CD8-positive, alpha-beta memory T cell (primary cell): ENCODE measurements at regions of chr1 and their contacts with region 1.

Region 1: DNA sequence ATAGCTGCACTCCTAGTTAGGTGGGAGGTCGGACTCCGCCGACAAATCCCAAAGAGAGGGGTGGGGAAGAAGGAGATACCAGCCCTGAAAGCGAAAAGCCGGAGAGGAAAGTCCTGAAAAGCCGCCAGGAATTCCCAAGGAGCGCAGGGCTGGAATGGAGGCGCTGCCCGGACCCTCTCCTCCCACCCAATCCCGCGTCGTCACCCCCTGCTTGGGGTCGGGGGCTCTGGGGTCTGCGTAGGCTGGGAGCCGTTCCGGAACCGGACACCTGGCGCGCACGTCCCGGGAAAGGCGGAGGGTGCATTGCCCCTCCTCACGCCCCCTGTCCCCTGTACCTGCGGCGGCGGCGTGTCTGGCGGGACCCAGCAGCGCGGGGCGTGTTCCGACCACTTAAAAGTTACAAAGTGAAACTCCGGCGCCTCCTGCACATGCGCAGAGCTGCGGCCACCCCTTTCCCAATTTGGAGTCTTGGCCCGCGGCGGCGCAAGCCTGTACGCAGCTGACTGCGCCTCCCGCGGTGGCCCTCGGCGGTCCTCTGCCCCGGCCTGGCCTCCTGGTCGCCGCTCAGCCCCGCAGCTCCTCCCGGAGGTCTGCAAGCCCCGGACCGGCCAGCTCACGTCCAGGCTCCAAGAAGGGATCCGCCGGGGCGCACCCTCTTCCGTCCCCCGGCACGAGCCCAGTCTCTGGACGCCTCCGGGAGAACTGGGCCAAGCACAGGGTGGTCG is at the start of gene TMEM63A:
- DNase-seq: peak; percentile 86 to 94 (median 89)
- H3K4me3 ChIP-seq: peak within 1 kb of the TSS; percentile 92
- H3K4me3 Mint-ChIP-seq: peak within 1 kb of the TSS; percentile 94 to 99 (median 97)
- H3K27ac ChIP-seq: peak within 1 kb of the TSS; percentile 95
- H3K27ac Mint-ChIP-seq: peak within 1 kb of the TSS; percentile 90 to 97 (median 96)
- H3K4me1 ChIP-seq: peaks cover 48% of the 10 kb centered on the region
- H3K4me1 Mint-ChIP-seq: peaks cover 50 to 54% (median 53%) of the 10 kb centered on the region in 3 donors
- H3K27me3 ChIP-seq: no peaks in the 10 kb centered on the region
- H3K27me3 Mint-ChIP-seq: no peaks in the 10 kb centered on the region
- total RNA-seq, gene TMEM63A: 51.4 to 55.5 TPM

Region 2: GRCh38 chr1:225467193-225468020 is 414.7 kb before region 1 on chr1:
- CTCF ChIA-PET with region 1: interaction called, 6 read pairs
- POLR2A ChIA-PET with region 1: interaction called, 12 read pairs
- DNase-seq: peak; percentile 73 to 88 (median 86)
- H3K4me3 ChIP-seq: peak overlapping the region; percentile 84
- H3K4me3 Mint-ChIP-seq: peak overlapping the region; percentile 88 to 96 (median 92)
- H3K27ac ChIP-seq: peak overlapping the region; percentile 90
- H3K27ac Mint-ChIP-seq: peak overlapping the region; percentile 92 to 100 (median 98)
- H3K4me1 ChIP-seq: peaks cover 29% of the 10 kb centered on the region
- H3K4me1 Mint-ChIP-seq: peaks cover 47 to 65% (median 55%) of the 10 kb centered on the region in 3 donors
- H3K27me3 ChIP-seq: no peaks in the 10 kb centered on the region
- H3K27me3 Mint-ChIP-seq: peaks cover 0 to 3% of the 10 kb centered on the region in 2 donors

Region 3: DNA sequence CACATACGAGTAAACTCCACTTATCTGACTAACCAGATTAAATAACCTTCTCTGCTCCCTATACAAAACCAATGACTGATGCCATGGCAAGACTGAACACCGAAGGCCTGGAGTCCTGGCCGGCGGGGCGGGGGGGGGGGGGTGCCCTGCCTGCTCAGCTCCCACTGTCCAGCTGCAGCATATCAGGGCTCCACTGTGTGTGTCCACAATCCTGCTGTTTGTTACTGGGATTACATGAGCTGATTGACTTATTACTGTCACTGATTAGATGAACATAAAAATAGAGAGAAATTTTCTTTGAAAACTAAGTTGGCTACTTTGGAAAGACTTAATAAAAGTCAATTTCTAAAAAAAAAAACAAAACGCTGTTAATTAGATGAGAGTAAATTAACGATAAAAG is 24.9 kb before region 1 on chr1:
- CTCF ChIA-PET with region 1: interaction called, 10 read pairs
- POLR2A ChIA-PET with region 1: interaction called, 7 read pairs
- DNase-seq: no peak
- H3K4me3 ChIP-seq: no peak overlapping the region
- H3K4me3 Mint-ChIP-seq: no peak overlapping the region
- H3K27ac ChIP-seq: no peak overlapping the region
- H3K27ac Mint-ChIP-seq: peak overlapping the region in 3 of 8 donors; percentile 33 to 93 (median 89)
- H3K4me1 ChIP-seq: peaks cover 9% of the 10 kb centered on the region
- H3K4me1 Mint-ChIP-seq: peaks cover 35 to 45% (median 41%) of the 10 kb centered on the region in 3 donors
- H3K27me3 ChIP-seq: no peaks in the 10 kb centered on the region
- H3K27me3 Mint-ChIP-seq: no peaks in the 10 kb centered on the region

Region 4: DNA sequence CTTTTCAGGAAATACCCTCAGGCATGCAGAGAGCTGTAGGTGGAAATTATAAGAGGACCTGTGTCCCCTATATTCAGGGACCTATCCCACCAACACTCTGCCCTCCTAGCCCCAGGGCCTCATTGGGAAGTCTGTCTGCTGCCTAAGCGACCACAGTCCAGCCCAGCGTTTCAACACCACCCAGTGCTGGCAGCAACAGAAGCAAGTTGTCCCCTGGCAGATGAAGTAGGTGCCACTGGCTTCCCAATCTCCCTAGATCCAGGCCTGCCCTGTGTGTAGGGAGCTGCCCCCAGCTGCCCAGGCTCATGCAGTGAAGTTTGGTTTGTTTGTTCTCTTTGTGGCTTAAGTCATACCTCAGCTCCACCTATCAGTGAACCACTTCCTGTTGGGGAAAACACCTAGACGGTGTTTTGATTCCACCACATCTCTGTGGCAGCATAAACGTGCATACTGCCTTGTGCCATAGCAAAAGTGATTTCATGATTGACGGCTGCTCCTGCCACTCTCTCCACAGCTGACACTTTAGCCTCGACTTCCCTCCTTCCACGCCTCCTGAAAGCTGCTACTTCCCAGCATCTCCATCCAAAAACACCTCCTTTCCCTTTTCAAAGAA is 14.9 kb after region 1 on chr1:
- CTCF ChIA-PET with region 1: interaction called, 117 read pairs
- POLR2A ChIA-PET with region 1: interaction called, 95 read pairs
- DNase-seq: peak; percentile 46 to 89 (median 85)
- H3K4me3 ChIP-seq: peak overlapping the region; percentile 48
- H3K4me3 Mint-ChIP-seq: peak overlapping the region; percentile 28 to 84 (median 82)
- H3K27ac ChIP-seq: peak overlapping the region; percentile 45
- H3K27ac Mint-ChIP-seq: peak overlapping the region; percentile 90 to 98 (median 95)
- H3K4me1 ChIP-seq: peaks cover 44% of the 10 kb centered on the region
- H3K4me1 Mint-ChIP-seq: peaks cover 45 to 62% (median 53%) of the 10 kb centered on the region in 3 donors
- H3K27me3 ChIP-seq: no peaks in the 10 kb centered on the region
- H3K27me3 Mint-ChIP-seq: no peaks in the 10 kb centered on the region

Region 5: GRCh38 chr1:225977937-225978748 is 96.0 kb after region 1 on chr1:
- CTCF ChIA-PET with region 1: interaction called, 11 read pairs
- POLR2A ChIA-PET with region 1: no interaction called
- DNase-seq: no peak
- H3K4me3 ChIP-seq: no peak overlapping the region
- H3K4me3 Mint-ChIP-seq: no peak overlapping the region
- H3K27ac ChIP-seq: no peak overlapping the region
- H3K27ac Mint-ChIP-seq: peak overlapping the region in 2 of 8 donors; percentile 36 to 43
- H3K4me1 ChIP-seq: no peaks in the 10 kb centered on the region
- H3K4me1 Mint-ChIP-seq: peaks cover 2 to 12% (median 5%) of the 10 kb centered on the region in 3 donors
- H3K27me3 ChIP-seq: no peaks in the 10 kb centered on the region
- H3K27me3 Mint-ChIP-seq: no peaks in the 10 kb centered on the region

Region 6: DNA sequence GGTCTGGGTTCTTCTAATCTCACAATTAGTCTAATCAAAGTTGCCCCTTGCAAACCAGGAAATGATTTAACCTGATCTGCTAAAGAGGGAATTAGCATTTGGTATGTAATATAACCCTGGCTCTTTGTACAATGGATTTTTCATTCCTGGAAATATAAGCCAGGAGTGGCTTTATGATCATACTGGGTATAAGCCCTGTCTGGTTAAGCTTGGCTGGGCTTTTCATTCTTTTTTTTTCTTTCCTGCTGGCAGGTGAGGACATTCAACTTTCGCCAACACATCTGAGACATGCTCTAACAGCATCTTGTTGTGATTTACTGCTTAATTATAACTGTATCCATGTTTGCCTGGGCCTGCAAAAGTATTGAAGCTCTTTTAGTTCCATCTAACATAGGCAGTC is 137.4 kb after region 1 on chr1:
- CTCF ChIA-PET with region 1: no interaction called
- POLR2A ChIA-PET with region 1: no interaction called
- DNase-seq: no peak
- H3K4me3 ChIP-seq: no peak overlapping the region
- H3K4me3 Mint-ChIP-seq: no peak overlapping the region
- H3K27ac ChIP-seq: no peak overlapping the region
- H3K27ac Mint-ChIP-seq: no peak overlapping the region
- H3K4me1 ChIP-seq: no peaks in the 10 kb centered on the region
- H3K4me1 Mint-ChIP-seq: no peaks in the 10 kb centered on the region
- H3K27me3 ChIP-seq: no peaks in the 10 kb centered on the region
- H3K27me3 Mint-ChIP-seq: peaks cover 0 to 10% of the 10 kb centered on the region in 2 donors